ENCODE measurements at regions of chr2 and their contacts with region 1.

Region 1: DNA sequence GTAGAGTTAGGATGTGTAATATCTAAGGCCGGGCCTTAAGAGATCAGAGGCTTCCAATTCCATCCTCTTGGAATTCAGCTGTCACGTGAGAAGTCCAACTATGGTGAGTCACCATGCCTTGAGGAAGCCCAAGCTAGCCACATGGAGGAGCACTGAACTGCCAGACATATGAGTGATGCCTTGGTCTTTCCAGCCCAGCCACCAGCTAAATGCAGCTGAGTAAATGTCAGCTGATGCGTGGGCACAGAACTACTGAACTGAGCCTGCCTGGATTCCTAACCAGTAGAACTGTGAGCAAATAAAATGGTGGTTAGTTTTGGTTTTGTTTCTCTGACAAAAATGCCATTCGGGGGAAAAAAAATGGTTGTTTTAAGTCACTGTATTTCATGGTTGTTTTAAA is 153.7 kb upstream of the SERTAD2 start:
- DNase-seq: peak; percentile 97
- H3K4me3 Mint-ChIP-seq: peak overlapping the region; percentile 34
- H3K27ac Mint-ChIP-seq: peak overlapping the region; percentile 71
- H3K4me1 Mint-ChIP-seq: peaks cover 17% of the 10 kb centered on the region
- H3K27me3 Mint-ChIP-seq: no peaks in the 10 kb centered on the region
- CTCF ChIP-seq: no peak

Region 2: DNA sequence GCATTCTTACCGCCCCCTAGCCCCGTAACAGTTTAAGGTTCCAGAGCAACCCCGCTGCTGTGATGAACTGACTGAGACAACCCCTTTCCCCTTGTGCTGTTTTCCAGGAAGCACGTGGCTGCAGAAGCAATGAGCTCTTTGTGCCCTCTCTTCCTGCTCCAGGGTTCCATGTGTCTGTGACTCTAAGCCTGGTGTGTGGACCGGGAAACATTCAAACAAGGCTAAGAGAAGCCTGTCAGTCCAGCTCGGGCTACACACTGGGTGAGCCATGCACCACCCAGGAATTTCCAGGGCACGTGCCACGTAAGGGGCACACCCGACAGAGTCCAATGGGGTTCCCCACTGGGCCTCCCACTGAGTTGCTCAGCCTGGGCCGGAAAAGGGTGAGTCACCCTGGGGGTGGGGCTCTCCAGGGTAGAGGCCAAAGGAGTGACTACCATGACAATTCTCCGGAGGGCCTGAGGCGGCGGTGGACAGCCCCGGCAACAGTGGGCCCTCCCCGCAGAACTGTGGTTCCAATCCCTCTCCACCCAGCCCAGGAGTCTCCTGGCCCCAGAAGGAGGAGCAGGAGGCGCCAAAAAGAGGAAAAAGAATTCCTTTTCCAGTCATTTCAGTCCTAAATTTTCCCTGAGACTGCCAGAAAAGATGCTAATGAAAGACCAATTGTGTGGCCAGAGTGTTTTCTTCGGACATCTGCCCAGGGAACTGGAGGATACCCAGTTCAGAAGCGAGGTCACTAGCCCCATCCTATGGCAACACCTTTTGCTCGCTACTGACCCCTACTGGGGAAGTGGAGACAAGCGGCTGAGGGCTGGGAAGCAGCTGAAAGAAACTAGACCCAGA is 23.9 kb after region 1 on chr2:
- CTCF ChIA-PET with region 1: interaction called, 4 read pairs
- POLR2A ChIA-PET with region 1: interaction called, 8 read pairs
- intact Hi-C with region 1: loop called (anchors 1 kb)
- DNase-seq: peak; percentile 98
- H3K4me3 Mint-ChIP-seq: peak overlapping the region; percentile 23
- H3K27ac Mint-ChIP-seq: peak overlapping the region; percentile 91
- H3K4me1 Mint-ChIP-seq: peaks cover 30% of the 10 kb centered on the region
- H3K27me3 Mint-ChIP-seq: no peaks in the 10 kb centered on the region
- CTCF ChIP-seq: peak; percentile 85

Region 3: DNA sequence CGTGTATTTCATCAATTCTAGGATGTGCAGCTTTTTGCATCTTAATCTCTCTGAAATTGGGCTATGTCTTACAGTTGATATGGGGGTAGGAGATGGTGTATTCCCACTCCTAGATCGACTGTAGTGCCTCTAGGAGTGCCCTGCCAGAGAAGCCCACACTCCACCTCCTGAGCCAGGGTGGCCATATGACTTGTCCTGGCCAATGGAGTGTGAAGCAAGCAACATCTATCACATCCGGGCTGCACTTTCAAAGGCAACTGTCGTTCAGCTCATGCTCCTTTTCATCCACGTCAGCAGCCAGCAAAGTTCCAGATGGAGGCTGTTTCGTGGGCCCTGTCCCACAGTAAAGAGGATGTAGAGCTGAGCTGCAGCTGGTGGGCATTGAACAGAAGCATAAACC is 32.4 kb after region 1 on chr2:
- CTCF ChIA-PET with region 1: interaction called, 3 read pairs
- POLR2A ChIA-PET with region 1: no interaction called
- intact Hi-C with region 1: loop called (anchors 2 kb)
- DNase-seq: no peak
- H3K4me3 Mint-ChIP-seq: no peak overlapping the region
- H3K27ac Mint-ChIP-seq: no peak overlapping the region
- H3K4me1 Mint-ChIP-seq: peaks cover 41% of the 10 kb centered on the region
- H3K27me3 Mint-ChIP-seq: no peaks in the 10 kb centered on the region
- CTCF ChIP-seq: no peak

Region 4: DNA sequence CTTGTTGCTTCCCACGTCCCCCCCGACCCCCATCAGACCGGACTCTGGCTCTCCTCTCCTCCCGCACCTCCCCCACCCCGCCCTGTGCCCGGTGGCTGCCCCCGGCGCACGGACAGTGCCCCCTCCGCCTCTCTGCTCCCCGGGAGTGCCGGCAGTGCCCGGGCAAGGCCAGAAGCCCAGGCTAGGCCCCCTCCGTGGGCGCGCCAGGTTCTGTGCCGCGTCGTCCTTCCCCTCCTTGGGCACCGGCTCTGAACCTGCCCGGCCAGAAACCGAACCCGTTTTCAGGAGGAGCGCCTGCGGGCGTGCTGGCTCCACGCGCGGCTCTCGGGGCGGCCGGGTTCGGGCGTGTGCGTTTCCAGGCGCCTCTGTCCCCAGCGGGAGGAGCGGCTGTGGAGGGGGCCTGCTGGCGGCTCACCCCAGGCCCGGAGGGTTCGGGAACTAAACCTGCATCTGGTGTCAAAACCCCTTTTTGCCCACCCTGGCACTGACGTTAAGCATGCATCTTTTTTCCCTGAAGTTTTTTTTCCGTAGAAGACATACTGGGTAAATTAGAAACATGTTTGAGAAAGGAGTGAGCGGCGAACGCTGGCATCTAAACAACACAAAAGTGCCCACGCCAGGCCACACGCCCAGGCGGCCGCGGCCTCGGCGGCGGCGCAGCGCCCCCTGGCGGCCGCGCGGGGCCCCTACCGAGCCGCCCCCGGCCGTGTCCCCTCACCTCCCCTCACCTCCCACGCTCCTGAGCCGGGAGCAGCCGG is 57.8 kb after region 1 on chr2:
- CTCF ChIA-PET with region 1: interaction called, 3 read pairs
- POLR2A ChIA-PET with region 1: no interaction called
- intact Hi-C with region 1: loop called (anchors 1 kb)
- DNase-seq: peak; percentile 68
- H3K4me3 Mint-ChIP-seq: peak overlapping the region; percentile 64
- H3K27ac Mint-ChIP-seq: no peak overlapping the region
- H3K4me1 Mint-ChIP-seq: peaks cover 7% of the 10 kb centered on the region
- H3K27me3 Mint-ChIP-seq: no peaks in the 10 kb centered on the region
- CTCF ChIP-seq: peak; percentile 86

Measured in MCF 10A (cell line).